CD4-positive, alpha-beta T cell (primary cell): ENCODE measurements at regions of chr19 and their contacts with region 1.

Region 1: DNA sequence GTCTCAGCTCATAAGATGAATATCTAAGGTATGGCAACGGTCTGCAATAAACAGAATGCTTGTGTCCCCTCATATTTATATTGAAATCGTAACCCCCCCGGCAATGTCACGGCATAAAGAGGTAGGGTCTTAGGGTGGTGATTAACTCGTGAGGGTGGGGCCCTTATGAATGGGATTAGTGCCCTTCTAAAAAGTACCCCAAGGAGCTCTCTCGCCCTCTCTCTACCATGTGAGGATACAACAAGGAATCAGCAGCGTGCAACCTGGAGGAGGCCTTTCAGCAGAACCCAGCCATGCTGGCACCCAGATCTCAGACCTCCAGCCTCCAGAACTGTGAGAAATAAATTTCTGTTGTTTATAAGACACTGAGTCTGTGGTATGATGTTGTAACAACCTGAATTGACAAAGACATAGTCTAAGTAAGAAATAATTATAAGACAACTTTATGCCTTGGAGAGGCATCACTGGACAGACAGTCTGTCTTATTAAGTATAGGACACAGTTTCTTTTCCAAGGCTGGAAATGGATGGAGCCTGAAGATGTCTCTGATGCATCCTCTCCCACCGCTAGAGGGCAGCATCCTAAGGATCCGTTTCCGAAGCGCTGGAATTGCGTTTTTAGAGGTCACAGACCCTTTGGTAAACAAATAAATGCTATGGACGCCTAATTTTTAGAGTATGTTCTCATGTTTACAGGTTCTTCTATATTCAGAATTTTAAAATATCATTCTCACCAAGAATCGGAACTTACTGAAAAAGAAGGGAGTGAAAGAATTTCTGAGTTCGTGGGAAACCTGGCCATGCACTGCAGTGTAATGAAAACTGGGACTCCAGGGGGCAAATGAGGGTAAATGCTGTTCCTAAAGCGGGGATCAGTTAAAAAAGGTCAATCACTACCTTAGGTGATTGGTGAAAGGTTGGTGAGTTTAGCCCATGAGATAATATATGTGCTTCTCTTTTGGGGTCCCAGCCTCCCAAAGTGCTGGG is 13.3 kb upstream of the LEUTX start:
- DNase-seq: peak in 12 of 14 experiments; percentile 6 to 71 (median 26)
- ATAC-seq: no peak
- H3K4me3 ChIP-seq: no peak overlapping the region
- H3K4me3 Mint-ChIP-seq: no peak overlapping the region
- H3K27ac ChIP-seq: no peak overlapping the region
- H3K27ac Mint-ChIP-seq: no peak overlapping the region
- H3K4me1 ChIP-seq: peaks cover 4% of the 10 kb centered on the region
- H3K4me1 Mint-ChIP-seq: no peaks in the 10 kb centered on the region
- H3K27me3 ChIP-seq: peaks cover 0 to 3% of the 10 kb centered on the region in 2 experiments
- H3K27me3 Mint-ChIP-seq: peaks cover 12% of the 10 kb centered on the region
- CTCF ChIP-seq: peak; percentile 81

Region 2: GRCh38 chr19:39546599-39546998 is 218.8 kb before region 1 on chr19:
- CTCF ChIA-PET with region 1: no interaction called
- POLR2A ChIA-PET with region 1: no interaction called
- intact Hi-C with region 1: loop called in 1 of 2 experiments (anchors 1 kb)
- DNase-seq: no peak
- ATAC-seq: no peak
- H3K4me3 ChIP-seq: no peak overlapping the region
- H3K4me3 Mint-ChIP-seq: no peak overlapping the region
- H3K27ac ChIP-seq: no peak overlapping the region
- H3K27ac Mint-ChIP-seq: peak overlapping the region; percentile 47
- H3K4me1 ChIP-seq: peaks cover 38% of the 10 kb centered on the region
- H3K4me1 Mint-ChIP-seq: peaks cover 51% of the 10 kb centered on the region
- H3K27me3 ChIP-seq: no peaks in the 10 kb centered on the region
- H3K27me3 Mint-ChIP-seq: no peaks in the 10 kb centered on the region
- CTCF ChIP-seq: no peak

Region 3: DNA sequence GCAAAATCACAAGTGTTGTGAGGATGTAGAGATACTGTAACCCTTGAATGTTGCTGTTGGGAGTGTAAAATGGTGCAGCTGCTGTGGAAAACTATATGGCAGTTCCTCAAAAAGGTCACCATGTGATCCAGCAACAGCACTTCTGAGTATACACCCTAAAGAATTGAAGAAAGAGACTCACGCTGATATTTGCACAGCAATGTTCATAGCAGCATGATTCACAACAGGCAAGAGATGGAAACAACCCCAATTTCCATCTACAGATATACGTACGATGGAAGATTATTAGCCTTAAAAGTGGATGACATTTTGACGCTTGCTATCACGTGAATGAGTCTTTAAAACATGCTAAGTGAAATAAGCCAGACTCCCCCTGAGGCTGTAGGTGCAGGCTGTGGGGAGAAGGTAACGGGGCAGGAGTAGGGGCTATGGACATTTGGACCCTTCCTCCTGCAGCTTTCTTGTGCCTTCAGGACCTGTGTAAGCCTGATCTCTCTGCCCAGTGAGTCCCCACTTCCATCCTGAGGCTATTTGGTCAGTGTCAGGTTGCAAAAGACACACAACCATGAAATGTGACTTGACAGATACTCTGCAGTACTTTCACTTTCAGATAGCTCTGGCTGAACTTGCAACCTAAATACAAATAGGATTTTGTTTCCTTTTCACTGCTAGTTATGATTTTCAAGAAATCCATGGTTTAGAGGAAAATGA is 207.8 kb before region 1 on chr19:
- CTCF ChIA-PET with region 1: no interaction called
- POLR2A ChIA-PET with region 1: no interaction called
- intact Hi-C with region 1: loop called in 1 of 2 experiments (anchors 2 kb)
- DNase-seq: peak in 1 of 14 experiments; percentile 53
- ATAC-seq: peak; percentile 39
- H3K4me3 ChIP-seq: peak overlapping the region; percentile 36
- H3K4me3 Mint-ChIP-seq: peak overlapping the region; percentile 72
- H3K27ac ChIP-seq: peak overlapping the region in 1 of 2 donors; percentile 43
- H3K27ac Mint-ChIP-seq: peak overlapping the region; percentile 80
- H3K4me1 ChIP-seq: peaks cover 14% of the 10 kb centered on the region
- H3K4me1 Mint-ChIP-seq: peaks cover 14% of the 10 kb centered on the region
- H3K27me3 ChIP-seq: no peaks in the 10 kb centered on the region
- H3K27me3 Mint-ChIP-seq: no peaks in the 10 kb centered on the region
- CTCF ChIP-seq: no peak

Region 4: GRCh38 chr19:39792999-39793546 is 27.7 kb after region 1 on chr19:
- CTCF ChIA-PET with region 1: no interaction called
- POLR2A ChIA-PET with region 1: no interaction called
- intact Hi-C with region 1: no loop called
- DNase-seq: peak; percentile 52 to 83 (median 64)
- ATAC-seq: peak; percentile 94
- H3K4me3 ChIP-seq: peak overlapping the region; percentile 58
- H3K4me3 Mint-ChIP-seq: peak overlapping the region; percentile 81
- H3K27ac ChIP-seq: no peak overlapping the region
- H3K27ac Mint-ChIP-seq: no peak overlapping the region
- H3K4me1 ChIP-seq: peaks cover 7% of the 10 kb centered on the region
- H3K4me1 Mint-ChIP-seq: no peaks in the 10 kb centered on the region
- H3K27me3 ChIP-seq: no peaks in the 10 kb centered on the region
- H3K27me3 Mint-ChIP-seq: peaks cover 11% of the 10 kb centered on the region
- CTCF ChIP-seq: peak; percentile 90